ENCODE measurements at regions of chr20 and their contacts with region 1.

Region 1: DNA sequence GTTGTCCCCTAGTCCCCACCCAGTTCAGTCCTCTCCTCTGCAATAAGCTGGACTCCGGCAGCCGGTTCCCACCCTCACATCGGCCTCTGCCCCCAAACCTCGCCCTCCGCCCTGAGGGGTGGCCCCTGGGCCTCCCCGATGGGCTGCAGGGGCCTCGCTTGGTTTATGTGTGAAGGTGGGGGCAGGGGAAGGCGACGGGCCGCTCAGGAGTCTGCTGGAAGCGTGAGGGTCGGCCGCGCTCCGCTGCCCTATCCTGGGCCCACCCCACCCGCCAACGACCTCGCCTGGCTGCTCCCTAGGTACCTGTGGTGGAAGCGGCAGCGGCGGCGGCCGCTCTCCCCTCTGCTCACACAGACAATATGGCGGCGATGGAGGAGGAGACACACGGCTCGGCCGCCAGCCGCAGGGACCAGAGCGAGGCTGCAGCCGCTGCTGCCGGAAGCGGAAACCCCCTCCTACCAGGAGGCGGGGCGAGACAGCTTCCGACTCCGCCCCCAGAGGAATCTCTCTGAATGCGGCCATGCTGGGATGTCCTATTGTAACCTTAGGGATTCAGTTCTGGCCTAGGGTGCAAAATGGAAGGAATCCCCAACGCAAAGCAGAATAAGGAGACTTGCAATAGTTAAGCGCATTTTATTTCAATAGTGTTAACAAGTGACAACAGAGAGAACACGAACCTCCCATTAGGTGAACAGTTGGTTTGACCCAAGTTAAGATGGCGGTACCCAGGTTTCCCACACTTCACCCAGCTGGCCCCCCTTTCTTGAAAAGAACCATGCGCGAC is at the start of gene CSNK2A1:
- DNase-seq: peak; percentile 93 to 94
- H3K4me3 ChIP-seq: peak within 1 kb of the TSS; percentile 58 to 97 (median 90)
- H3K27ac ChIP-seq: peak within 1 kb of the TSS; percentile 87 to 97 (median 92)
- H3K4me1 ChIP-seq: peaks cover 41 to 45% of the 10 kb centered on the region in 2 donors
- H3K27me3 ChIP-seq: no peaks in the 10 kb centered on the region
- CTCF ChIP-seq: peak in 1 of 6 experiments; percentile 8
- POLR2A ChIP-seq: peak; percentile 22 to 90
- total RNA-seq, gene CSNK2A1: 88.0 to 153 (median 105) TPM

Region 2: DNA sequence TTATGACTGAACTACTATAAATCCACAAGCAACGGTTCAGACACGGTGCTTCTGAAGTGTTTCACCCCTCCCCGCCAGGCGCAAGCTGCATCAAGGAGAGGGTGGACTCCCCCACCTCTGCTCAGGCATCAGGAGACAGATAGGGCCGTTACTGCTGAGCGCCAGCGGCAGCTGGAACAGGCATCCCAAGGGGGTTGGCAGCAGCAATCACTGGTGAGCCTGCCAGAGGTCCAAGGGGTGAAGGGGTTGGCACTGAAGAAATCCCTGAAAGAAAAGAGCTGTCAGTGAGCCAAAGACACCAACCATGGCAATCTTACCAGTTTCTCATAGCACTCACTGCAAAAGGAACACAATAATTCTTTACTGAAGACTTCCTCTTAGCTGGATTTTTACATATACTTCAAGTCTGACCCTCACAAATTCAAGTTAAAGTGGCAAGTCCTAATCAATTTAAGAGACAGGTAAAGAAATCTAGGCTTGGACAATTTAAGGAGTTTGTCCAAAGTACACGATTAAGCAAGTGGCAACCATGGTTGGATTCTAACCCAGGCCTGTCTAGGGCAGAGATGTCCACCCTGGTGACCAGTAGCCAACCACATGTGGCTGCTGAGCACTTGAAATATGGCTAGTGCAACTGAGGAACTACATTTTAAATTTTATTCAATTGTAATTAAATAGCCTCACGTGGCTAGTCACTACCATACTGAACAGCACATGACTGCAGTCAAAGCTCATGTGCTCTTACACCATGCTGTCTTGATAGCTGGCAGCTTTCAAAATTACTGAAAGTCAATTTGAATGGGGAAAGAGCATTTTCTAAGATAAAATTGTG is 59.5 kb before region 1 on chr20:
- intact Hi-C with region 1: loop called (anchors 10 kb)
- DNase-seq: peak; percentile 63 to 69
- H3K4me3 ChIP-seq: no peak overlapping the region
- H3K27ac ChIP-seq: peak overlapping the region in 1 of 3 donors; percentile 7
- H3K4me1 ChIP-seq: peaks cover 3 to 4% of the 10 kb centered on the region in 2 donors
- H3K27me3 ChIP-seq: no peaks in the 10 kb centered on the region
- CTCF ChIP-seq: no peak
- POLR2A ChIP-seq: no peak

Region 3: GRCh38 chr20:655726-656624 is 112.4 kb after region 1 on chr20:
- intact Hi-C with region 1: loop called (anchors 2 kb)
- DNase-seq: no peak
- H3K4me3 ChIP-seq: no peak overlapping the region
- H3K27ac ChIP-seq: no peak overlapping the region
- H3K4me1 ChIP-seq: peaks cover 12 to 19% of the 10 kb centered on the region in 2 donors
- H3K27me3 ChIP-seq: no peaks in the 10 kb centered on the region
- CTCF ChIP-seq: no peak
- POLR2A ChIP-seq: no peak